ENCODE measurements at regions of chr22 and their contacts with region 1.

Region 1: DNA sequence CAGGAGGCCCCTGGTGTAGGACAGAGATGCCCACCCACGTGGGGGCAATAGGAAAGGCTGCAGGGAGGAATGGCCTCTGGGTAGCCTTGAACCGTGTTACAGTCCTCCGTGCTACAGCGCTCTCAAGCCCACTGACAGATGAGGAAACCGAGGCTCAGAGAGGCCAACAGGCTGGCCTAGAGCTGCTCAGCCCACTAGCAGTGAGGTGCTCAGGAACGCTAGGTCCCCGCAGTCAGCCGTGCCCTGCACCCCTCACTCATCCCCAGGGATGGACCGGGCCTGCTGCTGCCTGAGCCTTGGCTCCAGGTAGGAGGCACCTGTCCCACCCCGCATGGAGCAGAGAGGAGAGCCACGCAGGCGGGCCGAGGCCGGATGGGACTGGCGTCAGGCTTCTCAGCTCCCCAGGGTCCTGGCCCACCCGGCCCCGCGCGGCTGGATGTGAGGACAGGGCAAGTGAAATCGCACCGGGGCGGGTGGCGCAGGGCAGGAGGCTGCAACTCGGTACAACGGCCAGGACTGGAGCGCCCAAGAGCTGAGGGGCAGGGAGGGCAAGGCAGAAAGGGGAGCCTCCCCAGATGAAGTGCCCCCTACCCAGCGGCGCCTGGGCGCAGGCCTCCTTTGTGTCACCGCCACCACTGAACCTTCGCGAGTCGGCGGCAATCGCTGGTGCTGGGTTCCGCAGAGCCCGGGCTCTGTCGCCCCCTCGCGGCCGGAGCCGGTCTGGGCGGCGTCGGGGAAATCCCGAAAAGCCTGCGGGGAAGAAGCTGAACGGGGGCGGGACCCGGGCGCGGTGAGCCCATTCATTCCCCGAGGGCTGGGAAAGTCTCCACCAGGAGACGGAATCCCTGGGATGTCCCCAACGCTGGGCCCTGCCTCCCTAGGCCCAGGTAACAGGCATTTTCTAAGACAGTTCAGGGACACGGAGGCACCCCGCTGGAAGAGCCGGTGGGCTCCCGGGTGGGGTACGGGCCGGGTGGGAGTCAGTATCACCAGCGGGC is 8.4 kb upstream of the SLC2A11 start:
- DNase-seq: peak; percentile 92
- H3K4me3 ChIP-seq: peak overlapping the region; percentile 19 to 43; a peak in 2 of 4 replicates
- H3K27ac ChIP-seq: no peak overlapping the region
- H3K4me1 ChIP-seq: peaks cover 4 to 36% of the 10 kb centered on the region in 2 experiments
- H3K27me3 ChIP-seq: no peaks in the 10 kb centered on the region
- CTCF ChIP-seq: peak; percentile 87
- EP300 ChIP-seq: no peak
- RAD21 ChIP-seq: peak; percentile 95

Region 2: GRCh38 chr22:23357053-23357452 is 492.3 kb before region 1 on chr22:
- CTCF ChIA-PET with region 1: no interaction called
- POLR2A ChIA-PET with region 1: no interaction called
- DNase-seq: no peak
- H3K4me3 ChIP-seq: no peak overlapping the region
- H3K27ac ChIP-seq: no peak overlapping the region
- H3K4me1 ChIP-seq: no peaks in the 10 kb centered on the region
- H3K27me3 ChIP-seq: peaks cover 17% of the 10 kb centered on the region
- CTCF ChIP-seq: no peak
- EP300 ChIP-seq: no peak
- RAD21 ChIP-seq: no peak

Region 3: DNA sequence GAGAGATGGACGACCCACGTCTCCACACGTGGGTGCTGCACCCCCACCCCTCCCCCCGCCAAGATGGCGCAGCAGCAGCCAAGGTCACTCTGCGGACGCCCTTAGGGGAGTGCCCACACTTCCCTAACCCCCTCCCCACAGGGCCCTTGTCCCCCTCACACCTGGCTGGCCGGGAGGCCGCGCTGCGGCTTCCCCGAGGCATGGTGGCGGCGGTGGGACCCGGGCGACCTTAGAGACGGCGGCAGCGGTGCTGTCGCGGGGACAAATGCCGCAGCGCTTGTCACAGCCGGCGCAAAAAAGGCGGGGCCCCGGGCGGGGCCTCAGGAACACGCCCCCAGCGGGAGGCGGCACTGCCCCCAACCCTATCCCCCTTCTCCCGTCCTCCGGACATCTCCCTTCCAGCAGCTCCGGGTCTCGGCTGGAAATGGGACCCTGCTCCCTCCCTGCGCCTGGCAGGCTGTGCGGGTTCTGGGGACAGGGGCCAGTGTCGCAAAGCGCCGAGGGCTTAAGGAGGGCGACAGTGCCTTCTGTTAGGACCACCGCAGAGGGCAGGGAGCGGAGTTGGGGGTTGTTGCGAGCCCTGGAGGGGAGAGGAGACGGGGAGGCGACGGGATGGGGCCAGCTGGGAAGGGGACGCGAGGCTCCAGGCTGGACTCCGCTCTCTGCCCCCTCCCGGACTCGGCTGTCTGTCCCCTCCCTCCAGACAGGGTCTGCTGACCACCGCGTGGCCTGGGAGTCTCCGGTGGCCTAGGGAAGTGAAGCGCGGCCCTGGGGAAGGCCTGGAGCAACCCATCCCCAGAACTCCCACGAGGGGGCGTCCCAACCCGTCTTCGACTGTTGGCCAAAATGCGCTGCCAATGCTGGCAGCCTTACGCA is 81.4 kb before region 1 on chr22 and contains the start of gene CHCHD10:
- CTCF ChIA-PET with region 1: interaction called, 277 read pairs
- POLR2A ChIA-PET with region 1: interaction called, 5 read pairs
- DNase-seq: peak; percentile 96
- H3K4me3 ChIP-seq: peak within 1 kb of the TSS; percentile 69
- H3K27ac ChIP-seq: peak within 1 kb of the TSS; percentile 48 to 89; a peak in 3 of 4 replicates
- H3K4me1 ChIP-seq: peaks cover 9 to 16% of the 10 kb centered on the region in 2 experiments; a peak in 3 of 4 replicates
- H3K27me3 ChIP-seq: no peaks in the 10 kb centered on the region
- CTCF ChIP-seq: peak; percentile 79
- EP300 ChIP-seq: no peak
- RAD21 ChIP-seq: peak; percentile 70
- polyA plus RNA-seq, gene CHCHD10: 27.7 and 70.1 TPM in 2 replicates

Region 4: GRCh38 chr22:23781511-23782315 is 67.6 kb before region 1 on chr22:
- CTCF ChIA-PET with region 1: interaction called, 36 read pairs
- POLR2A ChIA-PET with region 1: interaction called, 3 read pairs
- DNase-seq: no peak
- H3K4me3 ChIP-seq: no peak overlapping the region
- H3K27ac ChIP-seq: no peak overlapping the region
- H3K4me1 ChIP-seq: peaks cover 0 to 25% of the 10 kb centered on the region in 2 experiments; a peak in 1 of 4 replicates
- H3K27me3 ChIP-seq: no peaks in the 10 kb centered on the region
- CTCF ChIP-seq: no peak
- EP300 ChIP-seq: no peak
- RAD21 ChIP-seq: no peak

Region 5: GRCh38 chr22:23812378-23812777 is 36.9 kb before region 1 on chr22:
- CTCF ChIA-PET with region 1: interaction called, 14 read pairs
- POLR2A ChIA-PET with region 1: no interaction called
- DNase-seq: no peak
- H3K4me3 ChIP-seq: no peak overlapping the region
- H3K27ac ChIP-seq: no peak overlapping the region
- H3K4me1 ChIP-seq: peaks cover 0 to 8% of the 10 kb centered on the region in 2 experiments; a peak in 1 of 4 replicates
- H3K27me3 ChIP-seq: no peaks in the 10 kb centered on the region
- CTCF ChIP-seq: no peak
- EP300 ChIP-seq: no peak
- RAD21 ChIP-seq: no peak

Region 6: DNA sequence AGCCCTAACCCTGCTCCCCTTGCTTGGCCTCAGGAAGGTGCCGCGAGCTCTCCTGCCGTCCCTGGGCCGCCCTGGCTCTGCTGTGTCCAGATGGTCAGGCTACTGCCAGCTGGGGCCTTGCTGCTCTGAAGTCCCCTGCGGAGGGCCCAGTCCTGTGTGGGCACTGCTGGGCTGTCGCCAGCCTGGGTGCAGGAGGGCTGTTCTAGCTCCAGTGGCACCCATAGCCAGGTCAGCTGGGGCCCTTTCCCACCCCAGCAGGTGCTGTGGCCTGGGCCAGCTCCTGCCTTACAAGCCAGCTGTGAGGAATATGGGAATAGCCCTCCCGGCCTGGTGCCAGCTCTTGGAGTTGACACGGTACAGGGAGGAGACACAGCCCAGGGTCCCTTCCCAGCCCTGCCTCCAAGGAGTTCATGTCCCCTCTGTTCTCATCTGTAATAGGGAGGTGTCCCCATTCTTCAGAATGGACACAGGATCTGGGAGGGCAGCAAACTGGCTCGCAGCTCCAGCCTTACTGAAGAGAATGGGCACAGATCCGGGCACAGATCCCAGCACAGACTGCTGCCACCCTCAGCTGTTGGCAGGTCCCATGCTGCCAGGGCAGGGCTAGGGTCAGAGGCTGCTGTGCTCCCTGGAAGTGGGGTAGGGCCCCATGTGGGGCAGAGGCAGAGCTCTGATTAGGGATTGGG is 14.4 kb before region 1 on chr22:
- CTCF ChIA-PET with region 1: interaction called, 17 read pairs
- POLR2A ChIA-PET with region 1: interaction called, 8 read pairs
- DNase-seq: peak; percentile 12
- H3K4me3 ChIP-seq: no peak overlapping the region
- H3K27ac ChIP-seq: peak overlapping the region in 1 of 2 experiments; percentile 19; a peak in 1 of 4 replicates
- H3K4me1 ChIP-seq: peaks cover 0 to 53% of the 10 kb centered on the region in 2 experiments; a peak in 2 of 4 replicates
- H3K27me3 ChIP-seq: no peaks in the 10 kb centered on the region
- CTCF ChIP-seq: no peak
- EP300 ChIP-seq: no peak
- RAD21 ChIP-seq: no peak

Region 7: DNA sequence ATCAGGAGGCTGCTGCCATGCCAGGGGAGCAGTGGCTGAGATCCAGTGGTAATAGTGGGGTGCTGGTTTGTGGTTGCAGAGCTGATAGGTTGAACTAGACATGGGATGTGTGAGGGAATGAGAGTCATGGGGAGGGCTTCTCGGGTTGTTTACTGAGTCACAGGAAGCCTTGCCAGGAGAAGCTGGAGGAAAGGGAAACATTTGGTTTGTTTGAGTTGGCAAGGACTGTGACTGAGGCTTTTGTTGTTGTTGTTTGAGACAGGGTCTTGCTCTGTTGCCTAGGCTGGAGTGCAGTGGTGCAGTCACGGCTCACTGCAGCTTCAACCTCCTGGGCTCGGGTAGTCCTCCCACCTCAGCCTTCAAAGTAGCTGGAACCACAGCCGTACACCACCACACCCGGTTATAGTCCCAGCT is 211.1 kb after region 1 on chr22:
- CTCF ChIA-PET with region 1: no interaction called
- POLR2A ChIA-PET with region 1: no interaction called
- DNase-seq: no peak
- H3K4me3 ChIP-seq: no peak overlapping the region
- H3K27ac ChIP-seq: peak overlapping the region in 1 of 2 experiments; percentile 90; a peak in 2 of 4 replicates
- H3K4me1 ChIP-seq: peaks cover 0 to 30% of the 10 kb centered on the region in 2 experiments; a peak in 2 of 4 replicates
- H3K27me3 ChIP-seq: no peaks in the 10 kb centered on the region
- CTCF ChIP-seq: no peak
- EP300 ChIP-seq: 0 out of 4 replicates have a peak, but pooled peaks of 1 of the 2 experiments have one; percentile 19
- RAD21 ChIP-seq: no peak